ENCODE measurements at regions of chr11 and their contacts with region 1.

Region 1: GRCh38 chr11:46694072-46694471 is 6.3 kb downstream of the ARHGAP1 start:
- DNase-seq: no peak
- ATAC-seq: no peak
- H3K4me3 ChIP-seq: no peak overlapping the region
- H3K27ac ChIP-seq: no peak overlapping the region
- H3K4me1 ChIP-seq: no peaks in the 10 kb centered on the region
- H3K27me3 ChIP-seq: no peaks in the 10 kb centered on the region
- CTCF ChIP-seq: no peak

Region 2: GRCh38 chr11:46710821-46711269 is 16.8 kb after region 1 on chr11:
- CTCF ChIA-PET with region 1: no interaction called
- POLR2A ChIA-PET with region 1: interaction called, 11 read pairs
- intact Hi-C with region 1: no loop called
- DNase-seq: peak; percentile 43
- ATAC-seq: peak; percentile 85
- H3K4me3 ChIP-seq: no peak overlapping the region
- H3K27ac ChIP-seq: peak overlapping the region; percentile 28
- H3K4me1 ChIP-seq: peaks cover 12% of the 10 kb centered on the region
- H3K27me3 ChIP-seq: no peaks in the 10 kb centered on the region
- CTCF ChIP-seq: no peak

Region 3: GRCh38 chr11:46916286-46917108 is 222.4 kb after region 1 on chr11:
- CTCF ChIA-PET with region 1: no interaction called
- POLR2A ChIA-PET with region 1: no interaction called
- intact Hi-C with region 1: no loop called
- DNase-seq: no peak
- ATAC-seq: peak; percentile 14; the same call in 1 of the 2 replicates
- H3K4me3 ChIP-seq: peak overlapping the region; percentile 62
- H3K27ac ChIP-seq: no peak overlapping the region
- H3K4me1 ChIP-seq: peaks cover 17% of the 10 kb centered on the region
- H3K27me3 ChIP-seq: peaks cover 15% of the 10 kb centered on the region
- CTCF ChIP-seq: no peak